ENCODE measurements at regions of chr4 and their contacts with region 1.

Region 1: DNA sequence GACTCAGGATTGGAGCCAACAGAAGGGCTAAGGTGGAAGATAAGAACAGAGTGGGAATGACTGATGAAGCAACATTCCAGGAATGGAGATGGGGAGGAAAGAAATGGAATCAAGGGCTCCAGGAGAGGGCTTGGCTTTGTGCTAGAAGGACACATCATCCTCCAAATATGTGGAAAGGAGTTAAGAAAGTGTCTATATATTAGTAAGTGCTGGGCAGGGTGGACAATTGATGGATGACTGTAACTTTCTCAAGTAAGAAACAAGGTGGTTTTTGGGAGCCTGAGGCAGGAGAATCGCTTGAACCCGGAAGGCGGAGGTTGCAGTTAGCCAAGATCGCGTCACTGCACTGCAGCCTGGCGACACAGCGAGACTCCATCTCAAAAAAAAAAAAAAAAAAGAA is 71.6 kb upstream of the NFKB1 start:
- DNase-seq: no peak
- ATAC-seq: no peak
- H3K4me3 ChIP-seq: no peak overlapping the region
- H3K27ac ChIP-seq: no peak overlapping the region
- H3K4me1 ChIP-seq: peaks cover 0 to 2% of the 10 kb centered on the region in 2 donors
- H3K27me3 ChIP-seq: no peaks in the 10 kb centered on the region

Region 2: GRCh38 chr4:102344954-102345794 is 84.4 kb before region 1 on chr4 and contains the start of gene SLC39A8:
- intact Hi-C with region 1: loop called (anchors 1 to 5 kb)
- DNase-seq: peak; percentile 92 to 95
- ATAC-seq: peak; percentile 96
- H3K4me3 ChIP-seq: peak within 1 kb of the TSS; percentile 68 to 88
- H3K27ac ChIP-seq: no peak within 1 kb of the TSS
- H3K4me1 ChIP-seq: no peaks in the 10 kb centered on the region
- H3K27me3 ChIP-seq: no peaks in the 10 kb centered on the region
- total RNA-seq, gene SLC39A8: 16.5 to 31.3 TPM

Measured in aorta (tissue), 5 donors.